Caco-2 (cell line): ENCODE measurements at regions of chr21 and their contacts with region 1.

Region 1: GRCh38 chr21:33824156-33824941 is 91.3 kb downstream of the ATP5PO start:
- DNase-seq: no peak
- H3K4me3 ChIP-seq: no peak overlapping the region
- H3K4me3 Mint-ChIP-seq: no peak overlapping the region
- H3K27ac Mint-ChIP-seq: no peak overlapping the region
- H3K4me1 ChIP-seq: no peaks in the 10 kb centered on the region
- H3K4me1 Mint-ChIP-seq: no peaks in the 10 kb centered on the region
- H3K27me3 ChIP-seq: no peaks in the 10 kb centered on the region
- H3K27me3 Mint-ChIP-seq: no peaks in the 10 kb centered on the region
- CTCF ChIP-seq: peak in 1 of 2 experiments; percentile 20

Region 2: GRCh38 chr21:33894736-33895288 is 70.5 kb after region 1 on chr21:
- CTCF ChIA-PET with region 1: interaction called, 3 read pairs
- POLR2A ChIA-PET with region 1: no interaction called
- intact Hi-C with region 1: loop called (anchors 5 kb)
- DNase-seq: peak; percentile 83 to 87
- H3K4me3 ChIP-seq: no peak overlapping the region
- H3K4me3 Mint-ChIP-seq: peak overlapping the region; percentile 58
- H3K27ac Mint-ChIP-seq: peak overlapping the region; percentile 58
- H3K4me1 ChIP-seq: no peaks in the 10 kb centered on the region
- H3K4me1 Mint-ChIP-seq: peaks cover 11% of the 10 kb centered on the region
- H3K27me3 ChIP-seq: no peaks in the 10 kb centered on the region
- H3K27me3 Mint-ChIP-seq: no peaks in the 10 kb centered on the region
- CTCF ChIP-seq: peak; percentile 54 to 84